ENCODE measurements at regions of chr16 and their contacts with region 1.

Region 1: DNA sequence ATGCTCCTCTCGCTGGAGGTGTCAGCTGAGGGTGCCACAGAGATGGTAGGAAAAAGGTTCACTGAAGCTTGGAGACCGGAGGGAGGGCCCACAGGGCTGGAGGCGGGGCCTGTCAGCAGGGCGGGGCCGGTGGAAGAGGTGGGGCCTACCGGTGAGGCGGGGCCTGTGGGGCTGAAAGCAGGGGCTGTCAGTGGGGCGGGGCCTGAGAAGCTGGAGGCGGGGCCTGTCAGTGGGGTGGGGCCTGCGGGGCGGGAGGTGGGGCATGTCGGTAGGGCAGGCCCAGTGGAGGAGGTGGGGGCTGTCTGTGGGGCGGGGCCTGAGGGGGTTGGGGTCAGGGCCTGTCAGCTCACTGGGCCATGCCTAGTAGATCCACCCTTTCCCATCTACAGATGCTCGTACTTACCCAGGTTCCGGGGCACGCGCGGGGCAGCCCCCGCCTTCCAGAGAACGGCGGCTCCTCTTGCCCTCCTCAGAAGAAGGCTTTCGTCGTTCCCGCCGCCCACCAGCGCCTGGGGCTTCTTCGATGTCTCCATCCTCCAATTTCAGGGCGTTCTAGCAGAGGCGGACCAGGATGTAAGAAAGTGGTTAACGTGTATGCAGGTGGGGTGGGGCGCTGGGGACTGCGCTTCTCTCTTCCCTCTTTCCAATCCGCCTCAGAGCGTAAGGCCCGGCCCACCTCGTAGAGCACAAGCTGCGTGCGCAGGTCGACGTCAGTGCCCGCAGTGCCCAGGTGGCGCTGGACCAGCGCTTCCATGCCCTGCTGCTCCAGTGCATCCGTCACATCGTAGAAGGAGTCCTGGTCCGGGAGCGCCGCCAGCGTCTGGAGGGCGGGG is 9.8 kb downstream of the TMEM208 start:
- DNase-seq: peak; percentile 90 to 100 (median 98)
- ATAC-seq: peak; percentile 97
- H3K4me3 ChIP-seq: no peak overlapping the region
- H3K27ac ChIP-seq: peak overlapping the region; percentile 43; the same call in 1 of the 3 replicates
- H3K4me1 ChIP-seq: peaks cover 28 to 41% of the 10 kb centered on the region in 2 experiments
- H3K27me3 ChIP-seq: no peaks in the 10 kb centered on the region
- CTCF ChIP-seq: no peak
- EP300 ChIP-seq: no peak
- POLR2A ChIP-seq: no peak
- RAD21 ChIP-seq: no peak

Region 2: GRCh38 chr16:67055712-67056487 is 180.9 kb before region 1 on chr16:
- CTCF ChIA-PET with region 1: no interaction called
- POLR2A ChIA-PET with region 1: no interaction called
- in situ Hi-C with region 1: no loop called
- intact Hi-C with region 1: no loop called
- DNase-seq: peak in 3 of 4 experiments; percentile 17 to 57 (median 39)
- ATAC-seq: peak; percentile 56
- H3K4me3 ChIP-seq: no peak overlapping the region
- H3K27ac ChIP-seq: peak overlapping the region; percentile 58; the same call in 2 of the 3 replicates
- H3K4me1 ChIP-seq: peaks cover 13% of the 10 kb centered on the region in 2 experiments
- H3K27me3 ChIP-seq: no peaks in the 10 kb centered on the region
- CTCF ChIP-seq: no peak
- EP300 ChIP-seq: no peak
- POLR2A ChIP-seq: no peak
- RAD21 ChIP-seq: no peak

Region 3: DNA sequence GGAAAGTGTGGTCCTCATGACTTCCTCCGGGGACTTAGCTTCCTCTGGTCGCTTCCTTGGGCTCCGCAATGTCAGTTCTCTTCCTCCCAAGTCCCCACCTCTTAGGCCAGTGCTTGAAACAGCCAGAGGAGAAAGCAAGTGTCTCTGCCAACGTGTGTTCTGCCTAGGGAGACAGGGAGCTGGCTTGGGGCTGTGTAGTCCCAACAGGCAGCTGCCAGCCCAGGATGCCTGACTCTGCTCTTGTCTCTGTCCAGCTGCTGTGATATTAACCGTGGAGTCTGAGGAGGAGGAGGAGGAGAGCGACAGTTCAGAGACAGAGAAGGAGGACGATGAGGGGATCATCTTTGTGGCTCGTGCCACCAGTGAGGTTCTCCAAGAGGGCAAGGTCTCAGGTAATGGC is 29.1 kb after region 1 on chr16:
- CTCF ChIA-PET with region 1: no interaction called
- POLR2A ChIA-PET with region 1: no interaction called
- in situ Hi-C with region 1: no loop called
- intact Hi-C with region 1: no loop called
- DNase-seq: no peak
- ATAC-seq: no peak
- H3K4me3 ChIP-seq: no peak overlapping the region
- H3K27ac ChIP-seq: no peak overlapping the region
- H3K4me1 ChIP-seq: peaks cover 24 to 32% of the 10 kb centered on the region in 2 experiments
- H3K27me3 ChIP-seq: no peaks in the 10 kb centered on the region
- CTCF ChIP-seq: no peak
- EP300 ChIP-seq: no peak
- POLR2A ChIP-seq: no peak
- RAD21 ChIP-seq: no peak

Region 4: GRCh38 chr16:67279296-67280089 is 42.7 kb after region 1 on chr16 and contains the start of gene PLEKHG4:
- CTCF ChIA-PET with region 1: no interaction called
- POLR2A ChIA-PET with region 1: no interaction called
- in situ Hi-C with region 1: no loop called
- intact Hi-C with region 1: loop called (anchors 5 kb)
- DNase-seq: peak in 2 of 4 experiments; percentile 91 to 96
- ATAC-seq: peak; percentile 98
- H3K4me3 ChIP-seq: peak within 1 kb of the TSS; percentile 74
- H3K27ac ChIP-seq: peak within 1 kb of the TSS; percentile 83
- H3K4me1 ChIP-seq: peaks cover 22 to 44% of the 10 kb centered on the region in 2 experiments
- H3K27me3 ChIP-seq: no peaks in the 10 kb centered on the region
- CTCF ChIP-seq: peak; percentile 67 to 97 (median 93)
- EP300 ChIP-seq: peak; percentile 8; the same call in 1 of the 2 replicates
- POLR2A ChIP-seq: peak; percentile 69
- RAD21 ChIP-seq: peak; percentile 78 to 88
- polyA plus RNA-seq, gene PLEKHG4: 3.7 to 4.7 TPM